IMR-90 (cell line): ENCODE measurements at regions of chr3 and their contacts with region 1.

Region 1: GRCh38 chr3:50337191-50337841 is 3.3 kb downstream of the RASSF1 start:
- DNase-seq: peak; percentile 99
- ATAC-seq: peak; percentile 88
- H3K4me3 ChIP-seq: peak overlapping the region; percentile 73
- H3K27ac ChIP-seq: peak overlapping the region; percentile 84
- H3K4me1 ChIP-seq: peaks cover 32% of the 10 kb centered on the region
- H3K27me3 ChIP-seq: no peaks in the 10 kb centered on the region
- CTCF ChIP-seq: no peak
- POLR2A ChIP-seq: peak; percentile 90
- RAD21 ChIP-seq: no peak

Region 2: GRCh38 chr3:50163572-50164455 is 173.5 kb before region 1 on chr3:
- CTCF ChIA-PET with region 1: no interaction called
- POLR2A ChIA-PET with region 1: no interaction called
- dilution Hi-C with region 1: no loop called
- in situ Hi-C with region 1: no loop called
- intact Hi-C with region 1: no loop called
- DNase-seq: peak; percentile 93
- ATAC-seq: peak; percentile 63
- H3K4me3 ChIP-seq: no peak overlapping the region
- H3K27ac ChIP-seq: peak overlapping the region; percentile 30
- H3K4me1 ChIP-seq: peaks cover 54% of the 10 kb centered on the region
- H3K27me3 ChIP-seq: no peaks in the 10 kb centered on the region
- CTCF ChIP-seq: no peak
- POLR2A ChIP-seq: no peak
- RAD21 ChIP-seq: no peak

Region 3: GRCh38 chr3:50189274-50189673 is 148.0 kb before region 1 on chr3:
- CTCF ChIA-PET with region 1: no interaction called
- POLR2A ChIA-PET with region 1: no interaction called
- dilution Hi-C with region 1: no loop called
- in situ Hi-C with region 1: no loop called
- intact Hi-C with region 1: no loop called
- DNase-seq: peak; percentile 79
- ATAC-seq: peak; percentile 92
- H3K4me3 ChIP-seq: no peak overlapping the region
- H3K27ac ChIP-seq: no peak overlapping the region
- H3K4me1 ChIP-seq: no peaks in the 10 kb centered on the region
- H3K27me3 ChIP-seq: peaks cover 13% of the 10 kb centered on the region; the same call in 1 of the 2 replicates
- CTCF ChIP-seq: peak; percentile 95
- POLR2A ChIP-seq: peak; percentile 53; the same call in 1 of the 2 replicates
- RAD21 ChIP-seq: peak; percentile 99

Region 4: DNA sequence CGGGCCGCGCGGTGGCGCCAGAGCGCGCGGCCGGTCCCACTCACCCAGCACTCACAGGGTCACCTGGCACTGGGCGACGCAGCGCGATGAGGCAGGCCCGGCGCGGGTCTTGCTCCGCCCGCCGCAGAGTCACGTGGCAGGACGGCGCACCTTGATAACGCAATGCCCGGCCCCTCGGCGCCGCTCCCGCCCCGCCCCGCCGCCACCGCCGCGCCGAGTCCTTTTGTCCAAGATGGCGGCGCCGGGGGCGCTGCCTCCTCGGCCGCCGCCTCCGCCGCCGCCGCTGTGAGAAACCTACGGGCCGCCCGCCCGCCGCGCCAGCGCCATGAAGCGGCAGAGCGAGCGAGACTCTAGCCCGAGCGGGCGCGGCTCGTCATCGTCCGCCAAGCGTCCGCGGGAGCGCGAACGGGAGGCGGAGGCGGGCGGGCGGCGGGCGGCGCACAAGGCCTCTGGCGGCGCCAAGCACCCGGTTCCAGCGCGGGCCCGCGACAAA is 1053.8 kb after region 1 on chr3 and contains the start of gene RBM15B:
- CTCF ChIA-PET with region 1: no interaction called
- POLR2A ChIA-PET with region 1: no interaction called
- dilution Hi-C with region 1: no loop called
- in situ Hi-C with region 1: loop called (anchors 25 kb)
- intact Hi-C with region 1: no loop called
- DNase-seq: peak; percentile 96
- ATAC-seq: peak; percentile 93
- H3K4me3 ChIP-seq: peak within 1 kb of the TSS; percentile 70
- H3K27ac ChIP-seq: peak within 1 kb of the TSS; percentile 85
- H3K4me1 ChIP-seq: peaks cover 34% of the 10 kb centered on the region
- H3K27me3 ChIP-seq: no peaks in the 10 kb centered on the region
- CTCF ChIP-seq: peak; percentile 95
- POLR2A ChIP-seq: peak; percentile 96
- RAD21 ChIP-seq: peak; percentile 37; the same call in 1 of the 2 replicates
- total RNA-seq, gene RBM15B: 17.2 and 17.4 TPM in 2 replicates

Region 5: GRCh38 chr3:51547274-51547673 is 1210.0 kb after region 1 on chr3:
- CTCF ChIA-PET with region 1: no interaction called
- POLR2A ChIA-PET with region 1: interaction called, 16 read pairs
- dilution Hi-C with region 1: no loop called
- in situ Hi-C with region 1: no loop called
- intact Hi-C with region 1: no loop called
- DNase-seq: no peak
- ATAC-seq: no peak
- H3K4me3 ChIP-seq: no peak overlapping the region
- H3K27ac ChIP-seq: no peak overlapping the region
- H3K4me1 ChIP-seq: no peaks in the 10 kb centered on the region
- H3K27me3 ChIP-seq: no peaks in the 10 kb centered on the region
- CTCF ChIP-seq: no peak
- POLR2A ChIP-seq: no peak
- RAD21 ChIP-seq: no peak

Region 6: GRCh38 chr3:51974963-51975851 is 1637.9 kb after region 1 on chr3 and contains the start of gene ABHD14A:
- CTCF ChIA-PET with region 1: no interaction called
- POLR2A ChIA-PET with region 1: no interaction called
- dilution Hi-C with region 1: no loop called
- in situ Hi-C with region 1: loop called (anchors 25 kb)
- intact Hi-C with region 1: no loop called
- DNase-seq: peak; percentile 55
- ATAC-seq: peak; percentile 79
- H3K4me3 ChIP-seq: peak within 1 kb of the TSS; percentile 68
- H3K27ac ChIP-seq: peak within 1 kb of the TSS; percentile 43
- H3K4me1 ChIP-seq: peaks cover 13% of the 10 kb centered on the region
- H3K27me3 ChIP-seq: no peaks in the 10 kb centered on the region
- CTCF ChIP-seq: no peak
- POLR2A ChIP-seq: no peak
- RAD21 ChIP-seq: no peak
- total RNA-seq, gene ABHD14A: 3.1 and 3.4 TPM in 2 replicates

Region 7: DNA sequence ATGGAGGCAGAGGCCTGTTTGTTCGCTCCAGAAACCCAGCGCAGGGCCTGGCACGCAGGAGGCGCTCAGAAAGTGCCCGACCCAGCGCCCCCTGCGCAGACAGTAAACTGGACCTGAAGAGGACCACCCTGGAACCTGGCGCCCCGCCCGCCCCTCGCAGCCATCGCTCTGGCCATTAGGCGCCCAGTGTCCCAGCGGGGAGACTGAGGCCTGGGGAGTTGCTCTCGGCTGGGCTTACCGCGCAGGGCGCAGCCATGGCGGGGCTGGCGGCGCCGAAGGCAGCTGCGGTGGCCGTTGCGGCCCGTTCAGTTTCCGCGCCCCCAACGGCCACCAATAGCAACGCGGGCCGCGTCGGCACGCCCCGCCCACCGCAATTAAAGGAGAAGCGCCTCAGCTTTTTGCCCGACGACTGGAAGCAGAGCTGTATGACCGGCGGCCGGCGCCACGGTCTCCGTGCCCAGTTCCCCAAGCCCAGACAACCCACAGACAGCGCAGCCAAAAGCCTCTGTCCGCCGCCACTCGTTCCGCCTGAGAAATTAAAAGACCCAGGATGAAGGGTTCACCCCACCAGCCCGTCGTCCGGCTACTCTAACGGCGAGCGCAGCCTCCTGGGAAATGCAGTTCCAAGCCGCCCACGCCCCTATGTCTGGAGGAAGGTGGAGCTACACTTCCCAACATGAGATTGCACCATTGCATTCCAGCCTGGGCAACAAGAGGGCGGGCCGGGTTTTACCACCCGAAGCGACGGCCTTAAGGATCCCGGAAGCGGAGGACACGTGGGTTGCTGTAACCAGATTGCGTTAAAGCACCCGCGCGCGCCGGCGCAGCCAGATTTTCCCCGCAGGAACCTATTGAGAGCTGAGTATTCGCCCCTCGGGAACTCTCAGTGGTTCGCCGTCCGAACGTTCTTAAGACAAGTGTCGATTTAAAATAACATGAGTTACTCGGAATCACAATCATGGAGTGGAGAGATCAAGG is 1817.1 kb after region 1 on chr3 and contains the start of gene POC1A:
- CTCF ChIA-PET with region 1: no interaction called
- POLR2A ChIA-PET with region 1: no interaction called
- dilution Hi-C with region 1: no loop called
- in situ Hi-C with region 1: loop called (anchors 25 kb)
- intact Hi-C with region 1: no loop called
- DNase-seq: peak; percentile 98
- ATAC-seq: peak; percentile 96
- H3K4me3 ChIP-seq: peak within 1 kb of the TSS; percentile 74
- H3K27ac ChIP-seq: peak within 1 kb of the TSS; percentile 92
- H3K4me1 ChIP-seq: peaks cover 5% of the 10 kb centered on the region
- H3K27me3 ChIP-seq: no peaks in the 10 kb centered on the region
- CTCF ChIP-seq: no peak
- POLR2A ChIP-seq: no peak
- RAD21 ChIP-seq: peak; percentile 16; the same call in 1 of the 2 replicates
- total RNA-seq, gene POC1A: 8.3 and 10.6 TPM in 2 replicates